Pancreas (tissue), 10 donors: ENCODE measurements at regions of chr10 and their contacts with region 1.

Region 1: DNA sequence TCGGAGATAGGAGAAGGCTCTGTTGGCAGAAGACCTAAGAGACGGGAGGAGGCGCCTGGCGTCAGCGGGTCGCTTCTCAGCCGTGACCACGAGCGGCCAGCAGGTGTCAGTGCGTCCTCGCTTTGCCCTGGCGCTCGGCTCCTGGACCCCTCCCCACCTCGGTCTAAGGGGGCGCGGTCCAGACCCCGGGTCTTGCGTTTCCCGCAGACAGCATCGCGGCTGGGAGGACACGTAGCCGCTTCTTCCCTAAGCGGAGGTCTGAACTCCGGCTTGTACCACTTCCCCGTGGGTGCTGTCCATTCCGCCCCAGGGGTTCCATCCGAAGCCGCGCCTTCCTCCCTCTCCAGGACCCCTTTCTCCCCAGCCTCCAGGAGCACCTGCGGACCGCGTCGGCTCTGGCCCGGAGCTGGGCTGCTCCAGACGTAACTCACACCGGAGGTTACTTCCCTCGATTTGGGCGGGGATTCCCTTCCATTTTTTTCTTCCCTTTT is 593 bp upstream of the ADRA2A start:
- DNase-seq: peak; percentile 55 to 92 (median 76)
- ATAC-seq: peak; percentile 71 to 88 (median 85)
- H3K4me3 ChIP-seq: peak overlapping the region; percentile 44 to 69 (median 58)
- H3K27ac ChIP-seq: peak overlapping the region; percentile 31 to 80 (median 58)
- H3K4me1 ChIP-seq: peaks cover 0 to 8% (median 4%) of the 10 kb centered on the region in 3 donors
- H3K27me3 ChIP-seq: no peaks in the 10 kb centered on the region
- CTCF ChIP-seq: peak; percentile 66 to 84 (median 77)

Region 2: DNA sequence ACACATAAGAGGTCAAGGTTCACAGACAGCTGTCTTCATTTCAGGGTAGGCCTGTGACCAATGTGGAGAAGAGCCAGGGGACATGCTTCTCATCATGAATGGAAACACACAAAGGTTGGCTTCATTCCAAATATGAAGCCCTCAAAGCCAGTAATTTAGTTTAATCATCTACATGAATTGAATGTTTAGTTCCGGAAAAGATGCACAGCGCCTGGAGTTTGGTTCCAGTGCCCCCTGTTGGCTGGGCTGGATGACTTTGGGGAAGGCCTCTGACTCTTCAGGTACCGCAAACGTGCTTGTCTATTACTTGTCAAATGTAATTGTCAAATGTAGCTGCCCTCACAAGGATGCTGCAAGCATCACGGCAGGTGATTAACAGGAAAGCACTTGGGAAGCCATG is 131.3 kb after region 1 on chr10:
- intact Hi-C with region 1: loop called in 1 of 3 experiments (anchors 2 kb)
- DNase-seq: peak; percentile 46 to 75 (median 60)
- ATAC-seq: peak; percentile 81 to 92 (median 87)
- H3K4me3 ChIP-seq: no peak overlapping the region
- H3K27ac ChIP-seq: no peak overlapping the region
- H3K4me1 ChIP-seq: no peaks in the 10 kb centered on the region
- H3K27me3 ChIP-seq: no peaks in the 10 kb centered on the region
- CTCF ChIP-seq: peak; percentile 29 to 44 (median 40)

Region 3: GRCh38 chr10:111360260-111360925 is 284.2 kb after region 1 on chr10:
- intact Hi-C with region 1: loop called in 2 of 3 experiments (anchors 10 kb)
- DNase-seq: peak in 5 of 6 donors; percentile 23 to 69 (median 37)
- ATAC-seq: peak; percentile 95 to 100 (median 99)
- H3K4me3 ChIP-seq: no peak overlapping the region
- H3K27ac ChIP-seq: no peak overlapping the region
- H3K4me1 ChIP-seq: no peaks in the 10 kb centered on the region
- H3K27me3 ChIP-seq: no peaks in the 10 kb centered on the region
- CTCF ChIP-seq: peak; percentile 10 to 56 (median 46)